Caco-2 (cell line): ENCODE measurements at regions of chr7 and their contacts with region 1.

Region 1: DNA sequence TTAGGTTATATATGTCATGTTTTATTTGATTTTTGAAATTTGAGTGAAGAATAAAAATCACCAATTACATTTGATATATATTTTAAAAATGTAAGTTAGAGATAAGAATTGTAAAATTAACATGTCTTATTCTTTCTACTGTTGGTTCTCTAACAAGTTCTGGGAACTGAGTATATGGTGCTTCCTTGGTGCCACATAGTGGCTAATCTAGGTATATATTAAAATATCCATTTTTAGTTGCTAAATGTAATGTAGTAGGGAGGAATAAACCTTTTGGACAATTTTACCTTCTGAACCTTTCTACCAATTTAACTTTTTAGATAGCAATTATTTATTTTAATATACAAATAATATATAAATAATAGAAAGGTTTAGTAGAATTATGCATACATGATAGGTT is 17.5 kb downstream of the CFAP69 start:
- DNase-seq: peak in 1 of 2 experiments; percentile 24
- H3K4me3 ChIP-seq: no peak overlapping the region
- H3K4me3 Mint-ChIP-seq: no peak overlapping the region
- H3K27ac Mint-ChIP-seq: no peak overlapping the region
- H3K4me1 ChIP-seq: peaks cover 9% of the 10 kb centered on the region
- H3K4me1 Mint-ChIP-seq: no peaks in the 10 kb centered on the region
- H3K27me3 ChIP-seq: no peaks in the 10 kb centered on the region
- H3K27me3 Mint-ChIP-seq: no peaks in the 10 kb centered on the region
- CTCF ChIP-seq: peak; percentile 45 to 48

Region 2: DNA sequence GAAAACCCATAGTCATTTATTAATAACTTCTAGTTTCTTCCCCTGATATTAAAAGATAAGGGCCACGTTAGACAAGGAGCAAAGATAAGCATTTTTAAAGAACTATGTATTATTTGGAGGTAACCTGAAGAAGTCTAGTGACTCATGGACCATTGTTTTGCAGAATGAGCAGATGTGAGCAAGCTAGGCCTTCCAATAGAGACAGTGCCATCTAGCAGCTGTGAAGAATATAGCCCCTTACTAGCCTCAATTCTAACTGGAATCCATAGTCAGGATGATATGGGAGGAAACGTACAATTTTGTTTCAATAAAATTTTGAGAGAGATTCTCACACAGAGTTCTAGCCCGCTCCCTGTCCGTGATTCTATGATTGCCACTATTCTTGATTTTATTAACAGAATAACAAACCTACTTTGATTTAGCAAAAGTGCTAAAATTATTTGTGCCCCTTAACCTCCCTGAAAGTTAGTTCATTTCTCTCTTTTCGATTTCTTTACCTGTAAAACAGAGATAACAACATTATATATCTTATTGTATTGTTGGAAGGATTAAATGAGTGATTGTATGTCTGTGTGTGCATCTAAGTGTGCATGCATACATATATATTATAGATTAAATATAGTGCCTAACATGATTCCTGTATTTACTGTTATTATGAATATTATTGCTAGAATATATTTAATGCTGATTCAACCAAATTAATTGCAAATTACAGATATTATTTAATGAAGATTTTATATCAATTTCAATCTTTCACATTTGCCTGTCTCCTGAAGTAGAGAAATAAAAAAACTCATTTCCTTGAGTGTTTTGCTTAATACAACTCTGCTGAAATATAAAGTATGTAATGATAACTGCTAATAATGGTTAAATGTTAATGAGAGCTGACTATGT is 36.0 kb after region 1 on chr7:
- CTCF ChIA-PET with region 1: interaction called, 3 read pairs
- POLR2A ChIA-PET with region 1: no interaction called
- intact Hi-C with region 1: loop called (anchors 1 kb)
- DNase-seq: peak; percentile 41 to 52
- H3K4me3 ChIP-seq: no peak overlapping the region
- H3K4me3 Mint-ChIP-seq: no peak overlapping the region
- H3K27ac Mint-ChIP-seq: no peak overlapping the region
- H3K4me1 ChIP-seq: peaks cover 18% of the 10 kb centered on the region
- H3K4me1 Mint-ChIP-seq: peaks cover 15% of the 10 kb centered on the region
- H3K27me3 ChIP-seq: no peaks in the 10 kb centered on the region
- H3K27me3 Mint-ChIP-seq: no peaks in the 10 kb centered on the region
- CTCF ChIP-seq: peak; percentile 67 to 84

Region 3: GRCh38 chr7:90312745-90313144 is 50.3 kb after region 1 on chr7:
- CTCF ChIA-PET with region 1: no interaction called
- POLR2A ChIA-PET with region 1: no interaction called
- intact Hi-C with region 1: no loop called
- DNase-seq: no peak
- H3K4me3 ChIP-seq: no peak overlapping the region
- H3K4me3 Mint-ChIP-seq: no peak overlapping the region
- H3K27ac Mint-ChIP-seq: no peak overlapping the region
- H3K4me1 ChIP-seq: no peaks in the 10 kb centered on the region
- H3K4me1 Mint-ChIP-seq: no peaks in the 10 kb centered on the region
- H3K27me3 ChIP-seq: no peaks in the 10 kb centered on the region
- H3K27me3 Mint-ChIP-seq: no peaks in the 10 kb centered on the region
- CTCF ChIP-seq: no peak

Region 4: DNA sequence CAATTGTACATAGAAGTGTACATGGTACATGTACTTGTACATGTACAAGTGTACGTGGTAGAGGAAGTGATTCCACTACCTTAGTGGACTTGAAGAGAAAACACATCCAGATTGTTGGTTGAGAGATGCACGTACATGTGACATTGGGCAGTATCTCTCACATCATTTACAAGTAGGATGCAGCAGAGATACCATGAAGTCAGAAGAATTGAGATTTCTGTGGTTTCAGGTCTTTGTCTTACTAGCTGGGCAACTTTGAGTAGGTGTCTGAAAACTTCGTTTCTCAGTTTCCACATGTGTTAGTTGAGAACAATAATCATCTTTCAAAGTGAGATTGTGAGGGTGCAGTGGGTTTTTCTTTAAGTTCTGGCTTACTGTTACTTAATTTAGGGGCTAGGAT is 162.3 kb after region 1 on chr7:
- CTCF ChIA-PET with region 1: interaction called, 3 read pairs
- POLR2A ChIA-PET with region 1: no interaction called
- intact Hi-C with region 1: loop called (anchors 5 kb)
- DNase-seq: no peak
- H3K4me3 ChIP-seq: no peak overlapping the region
- H3K4me3 Mint-ChIP-seq: no peak overlapping the region
- H3K27ac Mint-ChIP-seq: no peak overlapping the region
- H3K4me1 ChIP-seq: no peaks in the 10 kb centered on the region
- H3K4me1 Mint-ChIP-seq: no peaks in the 10 kb centered on the region
- H3K27me3 ChIP-seq: no peaks in the 10 kb centered on the region
- H3K27me3 Mint-ChIP-seq: no peaks in the 10 kb centered on the region
- CTCF ChIP-seq: no peak